ENCODE measurements at regions of chr2 and their contacts with region 1.

Region 1: GRCh38 chr2:168469281-168469988 is 13.4 kb downstream of the CERS6 start:
- DNase-seq: no peak
- ATAC-seq: no peak
- H3K4me3 ChIP-seq: no peak overlapping the region
- H3K27ac ChIP-seq: no peak overlapping the region
- H3K4me1 ChIP-seq: peaks cover 18 to 26% (median 23%) of the 10 kb centered on the region in 3 donors
- H3K27me3 ChIP-seq: no peaks in the 10 kb centered on the region
- CTCF ChIP-seq: no peak

Region 2: DNA sequence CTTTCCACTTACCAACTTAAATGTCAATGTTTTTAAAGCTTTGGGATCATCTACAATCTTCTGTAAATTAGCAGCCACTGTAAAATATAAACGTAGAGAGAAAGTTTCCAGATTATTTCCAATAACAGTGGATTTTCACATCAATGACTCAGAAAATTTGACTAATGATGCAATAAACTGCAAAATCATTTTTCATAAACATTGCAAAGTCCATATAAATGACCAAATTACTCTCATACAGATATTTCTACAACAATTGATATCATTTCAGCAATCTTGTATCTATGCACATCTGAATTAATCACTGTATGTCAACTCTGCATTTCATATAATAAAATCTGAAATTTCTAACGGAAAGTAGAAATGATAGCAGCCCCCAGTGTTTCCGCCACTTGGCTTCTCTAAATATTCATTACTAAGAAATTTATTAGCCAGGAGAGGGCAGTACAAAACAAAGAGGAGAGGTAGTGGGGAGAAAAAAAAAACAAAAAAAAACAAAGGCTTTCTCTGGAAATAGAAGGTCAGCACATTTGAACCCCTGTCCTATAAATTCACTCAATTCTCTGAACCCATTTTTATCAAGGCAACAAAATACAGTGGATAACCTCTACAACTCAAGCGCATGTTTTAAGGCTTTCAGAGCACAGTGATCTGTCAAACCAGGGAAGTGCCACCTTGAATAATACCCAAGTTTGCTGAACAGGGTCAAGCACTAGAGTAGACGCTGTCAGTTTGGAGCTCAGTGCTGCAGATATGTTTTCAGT is 504.6 kb before region 1 on chr2:
- intact Hi-C with region 1: no loop called
- DNase-seq: no peak
- ATAC-seq: no peak
- H3K4me3 ChIP-seq: no peak overlapping the region
- H3K27ac ChIP-seq: no peak overlapping the region
- H3K4me1 ChIP-seq: no peaks in the 10 kb centered on the region
- H3K27me3 ChIP-seq: no peaks in the 10 kb centered on the region
- CTCF ChIP-seq: no peak

Region 3: DNA sequence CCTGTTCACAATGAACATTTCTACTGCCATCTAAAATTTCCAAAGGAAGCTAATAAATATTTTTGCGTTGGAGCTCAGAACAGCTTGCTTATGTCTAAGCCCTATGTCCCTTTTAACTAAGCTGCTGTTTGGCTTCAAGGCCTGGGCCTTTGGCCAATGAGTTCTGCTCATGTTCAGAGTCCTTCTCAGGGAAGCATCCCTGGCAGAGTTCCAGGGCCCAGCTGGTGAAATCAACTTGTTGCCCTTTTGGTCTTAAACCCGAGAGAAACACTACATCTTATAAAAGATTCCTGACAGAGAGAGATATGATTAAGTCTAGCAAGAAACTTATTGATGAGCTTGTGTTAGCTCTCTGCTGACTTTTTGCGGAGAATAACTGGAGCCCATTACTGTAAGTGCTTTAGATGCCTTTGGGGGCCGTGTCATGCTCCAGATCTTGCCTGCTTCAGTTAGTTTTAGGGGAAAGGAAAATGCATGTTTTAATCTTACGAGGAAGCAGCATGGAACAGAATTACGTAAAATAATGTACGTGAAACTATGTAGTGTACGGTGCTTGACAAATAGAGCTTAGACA is 230.5 kb after region 1 on chr2:
- intact Hi-C with region 1: loop called in 1 of 3 experiments (anchors 10 kb)
- DNase-seq: peak; percentile 13 to 74 (median 42)
- ATAC-seq: peak in 1 of 4 donors; percentile 32
- H3K4me3 ChIP-seq: no peak overlapping the region
- H3K27ac ChIP-seq: no peak overlapping the region
- H3K4me1 ChIP-seq: no peaks in the 10 kb centered on the region
- H3K27me3 ChIP-seq: no peaks in the 10 kb centered on the region
- CTCF ChIP-seq: no peak